CD8-positive, alpha-beta T cell (primary cell): ENCODE measurements at regions of chr16 and their contacts with region 1.

Region 1: GRCh38 chr16:69396187-69397061 is 10.6 kb upstream of the TERF2 start:
- DNase-seq: peak; percentile 27 to 87 (median 74)
- ATAC-seq: peak; percentile 85
- H3K4me3 ChIP-seq: no peak overlapping the region
- H3K4me3 Mint-ChIP-seq: no peak overlapping the region
- H3K27ac ChIP-seq: peak overlapping the region in 1 of 2 experiments; percentile 58
- H3K27ac Mint-ChIP-seq: peak overlapping the region; percentile 0
- H3K4me1 ChIP-seq: peaks cover 4% of the 10 kb centered on the region
- H3K4me1 Mint-ChIP-seq: peaks cover 6% of the 10 kb centered on the region
- H3K27me3 ChIP-seq: no peaks in the 10 kb centered on the region
- H3K27me3 Mint-ChIP-seq: no peaks in the 10 kb centered on the region
- CTCF ChIP-seq: peak; percentile 80

Region 2: DNA sequence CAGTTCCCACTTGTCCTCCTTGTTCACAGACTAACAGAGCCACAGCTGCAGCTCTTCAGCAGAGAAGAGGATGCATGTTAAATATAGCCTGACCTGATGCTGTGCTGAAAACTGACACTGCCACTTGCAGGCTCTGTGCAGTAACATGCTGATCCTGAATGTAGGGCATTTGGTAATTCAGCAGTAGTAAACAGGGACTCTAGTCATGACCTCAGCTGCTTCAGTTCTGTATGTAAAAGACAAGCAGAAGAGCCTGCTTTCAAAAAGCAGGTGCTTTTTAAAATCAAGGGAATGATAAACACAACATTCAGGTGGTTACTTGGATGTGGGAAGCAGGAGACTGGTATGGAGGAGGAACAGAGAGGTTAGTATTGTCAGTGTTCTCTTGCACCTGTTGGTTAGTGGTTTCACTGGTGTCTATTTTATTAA is 1194.3 kb before region 1 on chr16:
- CTCF ChIA-PET with region 1: no interaction called
- POLR2A ChIA-PET with region 1: no interaction called
- intact Hi-C with region 1: no loop called
- DNase-seq: no peak
- ATAC-seq: no peak
- H3K4me3 ChIP-seq: no peak overlapping the region
- H3K4me3 Mint-ChIP-seq: no peak overlapping the region
- H3K27ac ChIP-seq: no peak overlapping the region
- H3K27ac Mint-ChIP-seq: peak overlapping the region; percentile 80
- H3K4me1 ChIP-seq: no peaks in the 10 kb centered on the region
- H3K4me1 Mint-ChIP-seq: peaks cover 22% of the 10 kb centered on the region
- H3K27me3 ChIP-seq: no peaks in the 10 kb centered on the region
- H3K27me3 Mint-ChIP-seq: no peaks in the 10 kb centered on the region
- CTCF ChIP-seq: no peak

Region 3: DNA sequence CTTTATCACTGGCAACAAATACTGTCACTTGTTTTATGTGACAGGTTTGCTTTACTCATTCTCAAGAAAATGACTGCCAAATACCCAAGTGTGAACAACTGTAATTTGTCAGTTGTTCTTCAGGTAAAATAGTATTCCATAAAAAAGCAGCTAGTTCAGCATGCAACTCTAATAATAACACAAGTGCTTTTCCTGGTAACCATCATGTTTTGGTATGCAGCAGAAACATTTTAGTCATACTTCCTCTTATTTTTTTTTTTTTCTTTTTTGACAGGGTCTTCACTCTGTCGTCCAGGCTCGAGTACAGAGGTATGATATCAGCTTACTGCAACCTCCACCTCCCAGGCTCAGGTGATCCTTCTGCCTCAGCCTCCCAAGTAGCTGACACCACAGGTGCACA is 15.2 kb before region 1 on chr16:
- CTCF ChIA-PET with region 1: interaction called, 10 read pairs
- POLR2A ChIA-PET with region 1: no interaction called
- intact Hi-C with region 1: no loop called
- DNase-seq: no peak
- ATAC-seq: no peak
- H3K4me3 ChIP-seq: no peak overlapping the region
- H3K4me3 Mint-ChIP-seq: no peak overlapping the region
- H3K27ac ChIP-seq: no peak overlapping the region
- H3K27ac Mint-ChIP-seq: no peak overlapping the region
- H3K4me1 ChIP-seq: peaks cover 12% of the 10 kb centered on the region
- H3K4me1 Mint-ChIP-seq: peaks cover 41% of the 10 kb centered on the region
- H3K27me3 ChIP-seq: no peaks in the 10 kb centered on the region
- H3K27me3 Mint-ChIP-seq: no peaks in the 10 kb centered on the region
- CTCF ChIP-seq: no peak

Region 4: DNA sequence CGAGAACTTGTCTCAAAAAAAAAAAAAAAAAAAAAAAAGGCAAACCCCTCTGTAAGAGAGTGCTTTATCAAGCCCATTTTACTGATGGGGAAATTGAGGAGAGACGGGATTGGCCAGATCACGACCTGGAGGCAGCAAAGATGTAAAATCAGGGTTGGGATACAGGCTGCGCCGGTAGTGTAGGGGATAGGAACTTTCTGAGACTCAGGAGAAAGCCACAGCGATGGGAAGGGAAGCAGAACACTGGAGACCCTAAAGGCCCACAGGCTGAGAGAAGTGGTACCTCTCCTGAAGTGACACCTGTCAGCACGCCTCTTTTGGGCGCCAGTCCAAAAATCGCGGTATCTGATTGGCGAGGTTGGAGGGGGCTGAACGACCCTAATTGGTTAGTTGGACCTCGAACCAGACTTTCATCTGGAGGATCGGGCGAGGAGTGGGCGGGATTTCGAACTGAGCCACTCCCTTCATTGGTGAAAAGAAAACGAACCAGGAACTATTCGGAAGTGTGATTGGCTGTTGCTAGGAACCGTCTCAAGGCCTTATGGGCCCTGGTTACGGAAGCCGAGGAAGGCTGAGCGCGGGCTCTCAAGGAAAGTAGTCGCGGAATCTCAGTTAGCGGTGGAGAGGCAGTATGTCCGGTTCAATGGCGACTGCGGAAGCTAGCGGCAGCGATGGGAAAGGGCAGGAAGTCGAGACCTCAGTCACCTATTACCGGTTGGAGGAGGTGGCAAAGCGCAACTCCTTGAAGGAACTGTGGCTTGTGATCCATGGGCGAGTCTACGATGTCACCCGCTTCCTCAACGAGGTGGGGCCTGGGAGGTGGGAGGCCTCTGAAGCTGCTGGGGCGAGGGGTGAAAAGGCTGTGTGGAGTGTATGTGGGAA is 27.9 kb after region 1 on chr16 and contains the start of gene CYB5B:
- CTCF ChIA-PET with region 1: interaction called, 6 read pairs
- POLR2A ChIA-PET with region 1: no interaction called
- intact Hi-C with region 1: loop called in 1 of 2 experiments (anchors 1 kb)
- DNase-seq: peak; percentile 90 to 99 (median 95)
- ATAC-seq: peak; percentile 94
- H3K4me3 ChIP-seq: peak within 1 kb of the TSS; percentile 97 to 99
- H3K4me3 Mint-ChIP-seq: peak within 1 kb of the TSS; percentile 98
- H3K27ac ChIP-seq: peak within 1 kb of the TSS; percentile 86 to 87
- H3K27ac Mint-ChIP-seq: peak within 1 kb of the TSS; percentile 95
- H3K4me1 ChIP-seq: peaks cover 8% of the 10 kb centered on the region
- H3K4me1 Mint-ChIP-seq: peaks cover 35% of the 10 kb centered on the region
- H3K27me3 ChIP-seq: no peaks in the 10 kb centered on the region
- H3K27me3 Mint-ChIP-seq: no peaks in the 10 kb centered on the region
- CTCF ChIP-seq: no peak
- total RNA-seq, gene CYB5B: 16.2 to 18.6 TPM

Region 5: DNA sequence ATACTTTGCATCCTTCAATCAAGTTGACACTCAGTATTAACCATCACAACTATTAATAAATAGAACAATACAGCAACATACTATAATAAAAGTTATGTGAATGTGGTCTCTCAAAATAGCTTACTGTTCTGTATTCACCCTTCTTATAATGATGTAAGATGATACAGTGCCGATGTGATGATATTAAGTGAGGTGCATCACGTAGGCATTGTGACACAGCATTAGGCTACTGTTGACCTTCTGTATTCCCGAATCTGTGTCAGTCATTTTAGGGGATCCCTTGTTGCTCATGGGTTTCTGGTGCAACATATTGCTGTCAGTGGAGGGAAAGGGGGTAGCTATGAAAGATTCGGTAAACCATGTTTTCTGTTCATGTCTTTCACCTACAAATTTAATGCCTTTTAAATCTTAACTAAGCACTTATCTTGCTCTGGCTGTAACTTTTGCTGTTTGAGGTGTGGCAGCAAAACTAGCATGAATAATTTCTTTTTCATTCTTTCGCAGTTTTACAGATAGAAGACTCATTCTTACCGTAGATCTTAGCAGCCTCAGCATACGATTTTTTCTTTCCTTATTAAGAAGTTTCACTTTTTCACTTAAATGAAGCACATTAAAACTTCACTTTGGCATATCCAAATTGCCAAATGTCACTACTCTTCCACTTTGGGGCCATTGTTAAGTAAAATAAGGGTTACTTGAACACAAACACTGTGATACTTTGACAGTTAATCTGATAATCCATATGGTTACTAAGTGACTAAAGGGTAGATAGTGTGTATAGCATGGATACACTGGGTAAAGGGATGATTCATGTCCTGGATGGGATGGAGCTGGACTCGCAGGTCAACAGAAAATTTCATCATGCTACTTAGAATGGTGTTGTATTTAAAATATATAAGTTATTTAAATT is 199.0 kb after region 1 on chr16:
- CTCF ChIA-PET with region 1: no interaction called
- POLR2A ChIA-PET with region 1: no interaction called
- intact Hi-C with region 1: no loop called
- DNase-seq: no peak
- ATAC-seq: no peak
- H3K4me3 ChIP-seq: no peak overlapping the region
- H3K4me3 Mint-ChIP-seq: no peak overlapping the region
- H3K27ac ChIP-seq: no peak overlapping the region
- H3K27ac Mint-ChIP-seq: no peak overlapping the region
- H3K4me1 ChIP-seq: no peaks in the 10 kb centered on the region
- H3K4me1 Mint-ChIP-seq: peaks cover 43% of the 10 kb centered on the region
- H3K27me3 ChIP-seq: no peaks in the 10 kb centered on the region
- H3K27me3 Mint-ChIP-seq: no peaks in the 10 kb centered on the region
- CTCF ChIP-seq: no peak

Region 6: DNA sequence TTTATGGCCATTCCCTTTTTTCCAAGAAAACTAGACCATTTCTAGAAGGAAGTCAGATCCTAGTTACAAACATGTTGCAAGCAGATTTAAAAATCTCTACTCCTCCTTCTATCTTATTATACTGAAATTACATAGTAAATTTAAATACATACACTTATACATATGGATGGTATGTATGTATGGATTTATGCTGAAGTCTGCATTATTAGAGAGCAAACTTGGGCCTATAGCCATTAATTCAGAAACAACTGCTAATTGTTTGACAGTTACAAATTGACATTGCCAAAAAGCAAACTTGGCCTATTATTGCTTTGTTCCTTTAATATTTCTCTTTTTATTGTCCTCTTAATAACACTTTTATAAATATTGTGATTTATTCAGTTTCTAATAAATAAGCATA is 236.4 kb after region 1 on chr16:
- CTCF ChIA-PET with region 1: interaction called, 3 read pairs
- POLR2A ChIA-PET with region 1: no interaction called
- intact Hi-C with region 1: loop called in 1 of 2 experiments (anchors 10 kb)
- DNase-seq: no peak
- ATAC-seq: no peak
- H3K4me3 ChIP-seq: no peak overlapping the region
- H3K4me3 Mint-ChIP-seq: no peak overlapping the region
- H3K27ac ChIP-seq: no peak overlapping the region
- H3K27ac Mint-ChIP-seq: no peak overlapping the region
- H3K4me1 ChIP-seq: no peaks in the 10 kb centered on the region
- H3K4me1 Mint-ChIP-seq: no peaks in the 10 kb centered on the region
- H3K27me3 ChIP-seq: no peaks in the 10 kb centered on the region
- H3K27me3 Mint-ChIP-seq: no peaks in the 10 kb centered on the region
- CTCF ChIP-seq: no peak

Region 7: GRCh38 chr16:69672998-69673713 is 276.7 kb after region 1 on chr16:
- CTCF ChIA-PET with region 1: interaction called, 5 read pairs
- POLR2A ChIA-PET with region 1: no interaction called
- intact Hi-C with region 1: loop called in 1 of 2 experiments (anchors 10 kb)
- DNase-seq: no peak
- ATAC-seq: no peak
- H3K4me3 ChIP-seq: no peak overlapping the region
- H3K4me3 Mint-ChIP-seq: no peak overlapping the region
- H3K27ac ChIP-seq: no peak overlapping the region
- H3K27ac Mint-ChIP-seq: no peak overlapping the region
- H3K4me1 ChIP-seq: no peaks in the 10 kb centered on the region
- H3K4me1 Mint-ChIP-seq: no peaks in the 10 kb centered on the region
- H3K27me3 ChIP-seq: no peaks in the 10 kb centered on the region
- H3K27me3 Mint-ChIP-seq: no peaks in the 10 kb centered on the region
- CTCF ChIP-seq: no peak